GM18951 (cell line): ENCODE measurements at regions of chr1 and their contacts with region 1.

Region 1: GRCh38 chr1:15304701-15305467 is 57.9 kb downstream of the FHAD1 start:
- POLR2A ChIP-seq: no peak

Region 2: GRCh38 chr1:14894811-14895560 is 409.9 kb before region 1 on chr1:
- in situ Hi-C with region 1: no loop called
- POLR2A ChIP-seq: no peak

Region 3: GRCh38 chr1:14961661-14962267 is 343.1 kb before region 1 on chr1:
- in situ Hi-C with region 1: no loop called
- POLR2A ChIP-seq: no peak

Region 4: DNA sequence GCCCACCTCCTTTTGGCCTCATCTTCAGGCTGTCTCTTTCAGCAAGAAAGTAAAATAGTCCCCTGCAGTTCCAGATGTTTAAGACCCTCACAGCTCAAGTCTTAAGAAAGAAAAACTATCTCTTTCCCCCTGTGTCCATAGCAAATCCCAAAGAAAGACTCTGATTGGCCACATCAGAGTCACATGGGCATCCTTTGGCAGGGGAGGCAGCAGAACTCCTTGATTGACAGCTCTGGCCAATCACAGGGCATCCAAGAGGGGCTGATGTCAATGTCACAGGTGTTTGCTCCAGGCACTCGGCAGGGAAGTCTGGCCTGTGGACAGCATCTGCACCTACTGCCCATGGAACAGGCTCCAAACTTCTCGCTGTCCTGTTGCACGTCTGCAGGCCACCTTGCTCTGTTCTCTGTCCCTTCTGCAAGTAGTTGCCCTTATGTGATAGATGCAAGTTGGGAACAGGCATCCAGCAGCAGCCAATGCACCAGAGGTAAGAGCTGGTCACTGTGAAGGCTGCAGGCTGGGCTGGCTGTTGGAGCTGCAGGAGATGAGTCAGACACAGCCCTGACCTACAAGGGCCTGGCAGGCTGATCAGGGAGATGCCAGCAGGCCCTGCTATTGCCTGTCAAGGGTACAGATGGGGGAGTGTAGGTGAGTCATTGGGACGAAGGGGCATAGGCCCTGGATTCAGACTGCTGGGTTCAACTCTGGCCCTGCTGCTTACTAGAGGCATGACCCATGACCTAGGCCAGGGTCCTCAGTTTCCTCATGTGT is 248.2 kb before region 1 on chr1:
- in situ Hi-C with region 1: no loop called
- POLR2A ChIP-seq: no peak

Region 5: GRCh38 chr1:15128520-15129313 is 176.2 kb before region 1 on chr1:
- in situ Hi-C with region 1: loop called (anchors 10 kb)
- POLR2A ChIP-seq: no peak